ENCODE measurements at regions of chr7 and their contacts with region 1.

Region 1: DNA sequence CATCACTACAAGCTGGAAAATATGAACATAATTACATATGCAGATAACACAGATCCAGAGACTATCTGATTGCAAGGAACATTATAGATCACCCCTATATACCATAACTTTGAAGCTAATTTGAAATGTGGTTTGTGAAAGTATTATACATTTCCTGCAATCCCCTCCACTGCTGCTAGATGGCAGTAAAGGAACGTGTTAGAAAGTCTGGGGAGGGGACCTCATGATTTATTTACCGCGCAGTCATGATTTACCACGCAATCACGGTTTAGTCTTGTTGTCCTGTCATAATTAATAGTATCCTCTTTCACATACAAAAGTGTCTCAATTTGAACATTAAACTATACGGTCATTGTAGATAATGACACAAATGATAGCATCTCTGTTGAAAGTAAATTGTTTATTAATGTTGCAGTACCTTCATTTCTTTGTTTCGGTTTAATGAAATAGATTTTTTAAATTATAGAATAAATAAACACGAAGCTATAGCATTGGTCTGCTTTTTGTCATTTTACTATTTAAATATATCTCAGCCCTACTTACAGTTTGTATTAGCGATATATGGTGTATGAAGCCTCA is 145.3 kb upstream of the PRSS1 start:
- DNase-seq: peak; percentile 70
- ATAC-seq: peak; percentile 65
- H3K4me3 Mint-ChIP-seq: peak overlapping the region; percentile 20
- H3K27ac Mint-ChIP-seq: no peak overlapping the region
- H3K4me1 Mint-ChIP-seq: peaks cover 9% of the 10 kb centered on the region
- H3K27me3 Mint-ChIP-seq: no peaks in the 10 kb centered on the region
- CTCF ChIP-seq: peak; percentile 69

Region 2: GRCh38 chr7:142496545-142497041 is 107.4 kb before region 1 on chr7:
- CTCF ChIA-PET with region 1: no interaction called
- POLR2A ChIA-PET with region 1: no interaction called
- intact Hi-C with region 1: no loop called
- DNase-seq: peak; percentile 37
- ATAC-seq: peak; percentile 50
- H3K4me3 Mint-ChIP-seq: peak overlapping the region; percentile 30
- H3K27ac Mint-ChIP-seq: peak overlapping the region; percentile 47
- H3K4me1 Mint-ChIP-seq: peaks cover 37% of the 10 kb centered on the region
- H3K27me3 Mint-ChIP-seq: no peaks in the 10 kb centered on the region
- CTCF ChIP-seq: peak; percentile 74

Region 3: GRCh38 chr7:142587578-142588191 is 16.3 kb before region 1 on chr7:
- CTCF ChIA-PET with region 1: interaction called, 11 read pairs
- POLR2A ChIA-PET with region 1: no interaction called
- intact Hi-C with region 1: no loop called
- DNase-seq: no peak
- ATAC-seq: peak; percentile 79
- H3K4me3 Mint-ChIP-seq: peak overlapping the region; percentile 45
- H3K27ac Mint-ChIP-seq: peak overlapping the region; percentile 52
- H3K4me1 Mint-ChIP-seq: peaks cover 8% of the 10 kb centered on the region
- H3K27me3 Mint-ChIP-seq: no peaks in the 10 kb centered on the region
- CTCF ChIP-seq: peak; percentile 60

Region 4: DNA sequence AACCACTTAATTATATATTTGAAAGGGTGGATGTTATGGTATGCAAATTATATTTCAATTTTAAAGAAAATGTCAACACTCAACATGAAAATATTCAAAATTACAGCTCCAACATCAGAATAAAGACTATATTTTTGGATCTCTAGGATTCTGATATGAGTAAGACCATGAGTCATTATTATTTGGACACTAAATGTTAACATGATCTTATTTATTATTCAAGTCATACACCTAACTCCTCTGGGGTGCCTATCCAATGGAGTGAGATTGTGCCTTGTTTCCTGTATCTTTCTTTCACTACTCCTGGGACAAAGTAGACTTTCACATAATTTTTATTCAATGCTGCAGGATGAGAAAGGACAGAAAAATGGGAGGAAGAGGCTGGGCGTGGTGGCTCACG is 10.2 kb after region 1 on chr7:
- CTCF ChIA-PET with region 1: interaction called, 16 read pairs
- POLR2A ChIA-PET with region 1: no interaction called
- intact Hi-C with region 1: no loop called
- DNase-seq: no peak
- ATAC-seq: no peak
- H3K4me3 Mint-ChIP-seq: no peak overlapping the region
- H3K27ac Mint-ChIP-seq: no peak overlapping the region
- H3K4me1 Mint-ChIP-seq: peaks cover 11% of the 10 kb centered on the region
- H3K27me3 Mint-ChIP-seq: no peaks in the 10 kb centered on the region
- CTCF ChIP-seq: no peak

Region 5: GRCh38 chr7:142626420-142627035 is 22.6 kb after region 1 on chr7:
- CTCF ChIA-PET with region 1: interaction called, 12 read pairs
- POLR2A ChIA-PET with region 1: interaction called, 3 read pairs
- intact Hi-C with region 1: no loop called
- DNase-seq: peak; percentile 83
- ATAC-seq: peak; percentile 91
- H3K4me3 Mint-ChIP-seq: peak overlapping the region; percentile 72
- H3K27ac Mint-ChIP-seq: peak overlapping the region; percentile 82
- H3K4me1 Mint-ChIP-seq: no peaks in the 10 kb centered on the region
- H3K27me3 Mint-ChIP-seq: peaks cover 1% of the 10 kb centered on the region
- CTCF ChIP-seq: peak; percentile 30